ENCODE measurements at regions of chr6 and their contacts with region 1.

Region 1: GRCh38 chr6:89352278-89353117 is at the start of gene UBE2J1:
- DNase-seq: peak; percentile 85
- ATAC-seq: peak; percentile 84
- H3K4me3 Mint-ChIP-seq: peak within 1 kb of the TSS; percentile 91
- H3K27ac Mint-ChIP-seq: peak within 1 kb of the TSS; percentile 97
- H3K4me1 Mint-ChIP-seq: peaks cover 74% of the 10 kb centered on the region
- H3K27me3 Mint-ChIP-seq: no peaks in the 10 kb centered on the region
- total RNA-seq, gene UBE2J1: 18.7 to 21.7 TPM

Region 2: DNA sequence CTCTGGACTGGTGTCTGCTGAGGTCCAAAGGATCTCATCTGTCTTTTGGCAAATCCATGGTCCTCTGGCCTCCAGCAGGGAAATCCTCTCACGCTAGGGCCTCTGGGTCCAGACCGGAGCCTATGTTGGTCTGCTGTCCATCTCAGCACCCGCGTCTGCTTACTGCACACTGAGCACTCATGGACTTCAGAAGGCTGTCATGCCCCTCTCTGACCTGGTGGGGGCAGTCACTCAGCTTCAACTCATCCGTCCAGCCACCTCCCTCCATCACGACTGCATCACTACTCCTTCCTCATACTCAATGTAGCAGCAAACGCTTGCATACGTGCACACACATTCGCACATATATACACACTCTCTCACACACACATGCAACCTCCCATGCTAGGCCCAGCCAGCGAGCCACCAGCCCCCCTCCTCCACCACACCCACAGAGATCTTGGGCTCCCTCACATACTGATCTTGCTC is 70.7 kb before region 1 on chr6:
- CTCF ChIA-PET with region 1: interaction called, 5 read pairs
- POLR2A ChIA-PET with region 1: no interaction called
- intact Hi-C with region 1: loop called in 1 of 2 experiments (anchors 2 kb)
- DNase-seq: peak; percentile 71
- ATAC-seq: peak; percentile 96
- H3K4me3 Mint-ChIP-seq: no peak overlapping the region
- H3K27ac Mint-ChIP-seq: no peak overlapping the region
- H3K4me1 Mint-ChIP-seq: no peaks in the 10 kb centered on the region
- H3K27me3 Mint-ChIP-seq: no peaks in the 10 kb centered on the region

Region 3: DNA sequence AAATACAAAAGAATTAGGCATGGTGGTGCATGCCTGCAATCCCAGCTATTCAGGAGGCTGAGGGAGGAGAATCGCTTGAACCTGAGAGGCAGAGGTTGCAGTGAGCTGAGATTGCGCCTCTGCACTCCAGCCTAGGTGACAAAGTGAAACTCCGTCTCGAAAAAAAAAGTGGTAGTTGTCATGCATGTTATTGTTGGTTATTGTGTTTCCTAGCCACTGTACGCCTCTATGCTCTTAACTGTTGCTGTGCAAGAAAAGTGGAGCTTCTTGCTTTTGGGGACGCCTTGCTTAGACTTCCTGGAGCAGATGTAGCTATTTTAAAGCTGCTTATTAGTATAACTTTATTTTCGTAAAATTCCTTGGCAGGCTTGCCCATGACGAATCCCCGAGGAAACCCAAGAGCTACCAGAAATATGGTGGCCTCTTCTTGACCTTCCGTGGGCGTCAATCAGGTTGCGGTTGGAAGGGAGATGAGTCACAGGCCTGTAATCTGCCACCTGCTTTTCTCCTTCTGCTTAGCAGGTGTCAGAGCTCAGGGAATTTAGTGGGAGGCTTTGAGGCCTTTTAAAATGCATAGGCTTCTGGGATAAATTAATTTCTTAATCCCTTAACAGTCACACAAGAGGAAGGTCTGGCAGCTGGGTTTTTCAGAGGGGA is 54.7 kb before region 1 on chr6:
- CTCF ChIA-PET with region 1: interaction called, 3 read pairs
- POLR2A ChIA-PET with region 1: interaction called, 3 read pairs
- intact Hi-C with region 1: loop called (anchors 1 to 2 kb)
- DNase-seq: peak; percentile 85
- ATAC-seq: peak; percentile 77
- H3K4me3 Mint-ChIP-seq: peak overlapping the region; percentile 35
- H3K27ac Mint-ChIP-seq: peak overlapping the region; percentile 72
- H3K4me1 Mint-ChIP-seq: peaks cover 21% of the 10 kb centered on the region
- H3K27me3 Mint-ChIP-seq: no peaks in the 10 kb centered on the region

Region 4: DNA sequence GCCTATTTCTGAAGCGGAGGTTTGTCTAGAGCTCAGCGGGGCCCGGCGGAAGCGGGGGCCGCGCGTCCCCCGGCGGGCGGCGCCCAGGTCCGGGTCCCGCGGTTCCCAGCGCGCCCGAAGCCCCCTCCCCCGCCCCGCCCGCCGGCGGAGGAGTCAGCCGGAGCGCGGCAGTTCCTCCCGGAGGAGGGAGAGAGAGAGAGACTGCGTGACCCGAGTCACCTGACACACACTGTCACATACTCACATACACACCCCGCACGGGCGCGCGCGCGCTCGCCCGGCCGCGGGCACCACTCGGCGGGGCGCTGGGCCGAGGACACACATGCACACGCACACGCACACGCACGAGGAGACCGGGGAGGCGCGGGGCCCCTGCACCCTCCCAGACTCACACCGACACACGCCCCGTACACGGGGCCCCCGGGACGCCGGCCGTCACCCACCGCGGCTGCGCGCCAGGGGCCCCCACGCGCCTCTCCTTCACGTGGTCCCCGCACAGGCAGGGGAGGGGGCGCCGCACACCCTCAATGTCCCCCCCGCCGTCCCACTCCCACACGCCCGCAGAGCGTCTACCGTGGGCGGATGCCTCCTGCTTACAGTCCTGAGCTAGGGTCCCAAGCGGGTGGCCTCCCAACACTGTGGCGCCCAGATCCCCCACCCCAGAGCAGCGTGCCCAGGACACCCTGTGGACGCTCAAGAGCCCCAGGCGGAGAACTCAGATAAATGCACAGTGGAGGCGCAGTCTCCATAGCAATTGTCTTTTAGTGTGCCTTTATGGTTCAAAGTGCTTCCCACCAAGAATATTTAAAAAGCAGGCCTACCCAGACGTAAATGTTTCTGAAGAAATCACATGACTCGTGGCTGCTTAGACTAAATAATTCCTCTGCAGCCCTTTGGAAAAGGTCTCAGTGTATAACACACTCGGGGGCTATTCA is 59.8 kb after region 1 on chr6 and contains the start of gene RRAGD:
- CTCF ChIA-PET with region 1: no interaction called
- POLR2A ChIA-PET with region 1: no interaction called
- intact Hi-C with region 1: loop called in 1 of 2 experiments (anchors 5 kb)
- DNase-seq: peak; percentile 83
- ATAC-seq: peak; percentile 80
- H3K4me3 Mint-ChIP-seq: peak within 1 kb of the TSS; percentile 83
- H3K27ac Mint-ChIP-seq: peak within 1 kb of the TSS; percentile 85
- H3K4me1 Mint-ChIP-seq: peaks cover 20% of the 10 kb centered on the region
- H3K27me3 Mint-ChIP-seq: peaks cover 3% of the 10 kb centered on the region
- total RNA-seq, gene RRAGD: 19.6 to 20.1 TPM

Region 5: DNA sequence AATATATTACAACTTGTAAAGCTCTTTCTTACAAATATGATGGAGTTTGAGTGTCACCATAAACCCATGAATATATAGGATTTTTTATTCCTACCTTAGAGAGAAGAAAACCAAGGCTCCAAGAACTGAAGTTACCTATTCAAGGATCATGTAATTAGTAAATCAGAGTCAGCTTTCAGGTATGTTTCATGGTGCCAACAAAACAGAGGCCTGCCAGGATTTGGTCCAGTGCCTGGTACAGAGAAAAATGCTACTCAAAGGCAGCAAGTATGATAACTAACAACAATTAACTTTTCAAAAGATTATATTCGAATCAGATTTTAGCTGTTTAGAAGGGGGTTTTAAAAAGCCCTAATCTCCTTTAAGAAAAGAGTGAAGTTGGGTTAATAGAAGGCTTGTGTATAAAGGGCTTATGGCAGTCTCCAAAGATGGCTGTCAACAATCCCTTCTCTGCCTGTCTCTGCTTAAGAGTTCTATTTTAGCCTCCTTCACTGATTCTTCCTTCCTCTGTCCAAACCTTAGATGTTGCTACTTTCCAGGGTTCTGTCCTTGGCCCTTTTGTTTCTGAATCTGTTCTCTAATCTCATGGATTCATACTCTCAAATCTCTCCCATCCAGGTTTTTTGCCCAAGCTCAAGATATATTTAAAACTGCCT is 1226.5 kb after region 1 on chr6:
- CTCF ChIA-PET with region 1: no interaction called
- POLR2A ChIA-PET with region 1: no interaction called
- intact Hi-C with region 1: no loop called
- DNase-seq: no peak
- ATAC-seq: no peak
- H3K4me3 Mint-ChIP-seq: no peak overlapping the region
- H3K27ac Mint-ChIP-seq: no peak overlapping the region
- H3K4me1 Mint-ChIP-seq: peaks cover 26% of the 10 kb centered on the region
- H3K27me3 Mint-ChIP-seq: no peaks in the 10 kb centered on the region